HepG2 (cell line): ENCODE measurements at regions of chr4 and their contacts with region 1.

Region 1: GRCh38 chr4:110510955-110511544 is 35.1 kb downstream of the ENPEP start:
- DNase-seq: peak; percentile 39
- ATAC-seq: peak; percentile 60
- H3K4me3 ChIP-seq: no peak overlapping the region
- H3K27ac ChIP-seq: no peak overlapping the region
- H3K4me1 ChIP-seq: peaks cover 7% of the 10 kb centered on the region; the same call in 1 of the 2 replicates
- H3K27me3 ChIP-seq: no peaks in the 10 kb centered on the region
- CTCF ChIP-seq: peak; percentile 56
- EP300 ChIP-seq: no peak
- POLR2A ChIP-seq: no peak
- RAD21 ChIP-seq: peak; percentile 21; the same call in 1 of the 2 replicates

Region 2: GRCh38 chr4:109511414-109511813 is 999.6 kb before region 1 on chr4:
- CTCF ChIA-PET with region 1: no interaction called
- POLR2A ChIA-PET with region 1: no interaction called
- in situ Hi-C with region 1: no loop called
- intact Hi-C with region 1: no loop called
- DNase-seq: no peak
- ATAC-seq: no peak
- H3K4me3 ChIP-seq: no peak overlapping the region
- H3K27ac ChIP-seq: no peak overlapping the region
- H3K4me1 ChIP-seq: no peaks in the 10 kb centered on the region
- H3K27me3 ChIP-seq: no peaks in the 10 kb centered on the region
- CTCF ChIP-seq: no peak
- EP300 ChIP-seq: no peak
- POLR2A ChIP-seq: no peak
- RAD21 ChIP-seq: no peak

Region 3: GRCh38 chr4:110310795-110311194 is 200.3 kb before region 1 on chr4:
- CTCF ChIA-PET with region 1: interaction called, 4 read pairs
- POLR2A ChIA-PET with region 1: no interaction called
- in situ Hi-C with region 1: loop called (anchors 5 kb)
- intact Hi-C with region 1: loop called (anchors 1 kb)
- DNase-seq: no peak
- ATAC-seq: no peak
- H3K4me3 ChIP-seq: no peak overlapping the region
- H3K27ac ChIP-seq: no peak overlapping the region
- H3K4me1 ChIP-seq: no peaks in the 10 kb centered on the region
- H3K27me3 ChIP-seq: no peaks in the 10 kb centered on the region
- CTCF ChIP-seq: no peak
- EP300 ChIP-seq: no peak
- POLR2A ChIP-seq: no peak
- RAD21 ChIP-seq: no peak

Region 4: GRCh38 chr4:110395421-110395820 is 115.6 kb before region 1 on chr4:
- CTCF ChIA-PET with region 1: no interaction called
- POLR2A ChIA-PET with region 1: no interaction called
- in situ Hi-C with region 1: no loop called
- intact Hi-C with region 1: no loop called
- DNase-seq: no peak
- ATAC-seq: no peak
- H3K4me3 ChIP-seq: no peak overlapping the region
- H3K27ac ChIP-seq: no peak overlapping the region
- H3K4me1 ChIP-seq: no peaks in the 10 kb centered on the region
- H3K27me3 ChIP-seq: no peaks in the 10 kb centered on the region; a peak in 1 of 5 replicates
- CTCF ChIP-seq: no peak
- EP300 ChIP-seq: no peak
- POLR2A ChIP-seq: no peak
- RAD21 ChIP-seq: no peak